Mucosa of descending colon (tissue), 3 donors: ENCODE measurements at regions of chr14 and their contacts with region 1.

Region 1: GRCh38 chr14:65164068-65164824 is 61.9 kb upstream of the MAX start:
- DNase-seq: peak in 1 of 3 donors; percentile 66
- ATAC-seq: peak; percentile 72
- H3K4me3 ChIP-seq: no peak overlapping the region
- H3K4me1 ChIP-seq: no peaks in the 10 kb centered on the region
- CTCF ChIP-seq: peak; percentile 27

Region 2: GRCh38 chr14:65222440-65222858 is 58.2 kb after region 1 on chr14:
- intact Hi-C with region 1: no loop called
- DNase-seq: peak; percentile 65 to 81 (median 74)
- ATAC-seq: peak; percentile 57
- H3K4me3 ChIP-seq: no peak overlapping the region
- H3K4me1 ChIP-seq: peaks cover 13% of the 10 kb centered on the region
- CTCF ChIP-seq: peak; percentile 70

Region 3: DNA sequence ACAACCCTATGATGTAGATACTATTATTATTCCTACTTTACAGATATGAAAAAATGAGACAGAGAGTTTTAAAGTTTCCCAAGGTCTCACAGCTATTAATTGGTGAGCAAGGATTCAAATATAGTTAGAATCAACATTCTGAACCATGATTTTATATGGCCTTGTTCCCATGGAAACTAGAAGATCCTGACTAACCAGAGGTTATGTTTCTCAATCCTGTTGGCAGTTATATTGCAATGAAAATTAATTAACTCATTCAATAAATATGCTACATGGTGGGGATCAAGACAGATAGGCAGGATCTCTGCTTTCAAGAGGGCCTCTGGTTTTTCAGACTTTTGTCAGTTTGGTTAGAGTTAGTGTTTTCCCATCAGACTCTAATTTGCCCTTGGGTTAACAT is 239.0 kb after region 1 on chr14:
- intact Hi-C with region 1: loop called in 1 of 2 experiments (anchors 10 kb)
- DNase-seq: no peak
- ATAC-seq: no peak
- H3K4me3 ChIP-seq: no peak overlapping the region
- H3K4me1 ChIP-seq: no peaks in the 10 kb centered on the region
- CTCF ChIP-seq: no peak

Region 4: DNA sequence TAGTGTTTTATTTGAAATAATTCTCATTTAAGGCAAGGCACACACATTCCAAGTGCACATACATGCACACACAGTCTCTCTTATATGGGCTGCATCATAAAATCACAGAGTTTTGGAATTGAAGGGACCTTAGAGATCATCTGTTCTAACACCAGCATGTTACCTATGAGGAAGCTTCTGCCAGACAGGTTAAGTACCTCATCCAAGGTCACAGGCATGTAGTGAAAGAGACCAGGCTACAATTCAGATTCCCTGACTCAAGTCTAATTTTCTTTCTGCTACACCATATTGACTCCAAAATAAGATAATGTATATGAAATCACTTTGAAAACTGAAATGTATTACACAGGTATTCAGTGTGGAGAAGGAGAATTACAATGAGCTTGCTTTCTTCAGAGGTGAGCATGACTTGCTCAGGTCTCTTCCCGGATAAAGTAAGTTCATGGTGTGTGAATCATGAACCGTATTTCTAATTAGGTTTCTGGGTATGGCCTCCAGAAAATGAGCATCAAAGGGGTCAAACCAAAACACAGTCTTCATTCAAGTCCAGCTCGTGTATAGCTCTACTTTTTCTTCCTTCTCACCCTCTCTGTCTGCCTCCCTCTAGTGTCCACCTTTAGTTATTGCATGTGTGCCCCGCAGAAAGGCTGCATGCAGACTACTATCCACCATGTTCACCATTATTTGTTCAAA is 660.2 kb after region 1 on chr14:
- intact Hi-C with region 1: loop called in 1 of 2 experiments (anchors 10 kb)
- DNase-seq: peak in 2 of 3 donors; percentile 40 to 65
- ATAC-seq: peak; percentile 90
- H3K4me3 ChIP-seq: no peak overlapping the region
- H3K4me1 ChIP-seq: no peaks in the 10 kb centered on the region
- CTCF ChIP-seq: peak; percentile 84

Region 5: GRCh38 chr14:65958664-65959562 is 794.7 kb after region 1 on chr14:
- intact Hi-C with region 1: loop called in 1 of 2 experiments (anchors 10 kb)
- DNase-seq: peak in 2 of 3 donors; percentile 29 to 37
- ATAC-seq: peak; percentile 76
- H3K4me3 ChIP-seq: no peak overlapping the region
- H3K4me1 ChIP-seq: peaks cover 16% of the 10 kb centered on the region
- CTCF ChIP-seq: peak; percentile 27

Region 6: DNA sequence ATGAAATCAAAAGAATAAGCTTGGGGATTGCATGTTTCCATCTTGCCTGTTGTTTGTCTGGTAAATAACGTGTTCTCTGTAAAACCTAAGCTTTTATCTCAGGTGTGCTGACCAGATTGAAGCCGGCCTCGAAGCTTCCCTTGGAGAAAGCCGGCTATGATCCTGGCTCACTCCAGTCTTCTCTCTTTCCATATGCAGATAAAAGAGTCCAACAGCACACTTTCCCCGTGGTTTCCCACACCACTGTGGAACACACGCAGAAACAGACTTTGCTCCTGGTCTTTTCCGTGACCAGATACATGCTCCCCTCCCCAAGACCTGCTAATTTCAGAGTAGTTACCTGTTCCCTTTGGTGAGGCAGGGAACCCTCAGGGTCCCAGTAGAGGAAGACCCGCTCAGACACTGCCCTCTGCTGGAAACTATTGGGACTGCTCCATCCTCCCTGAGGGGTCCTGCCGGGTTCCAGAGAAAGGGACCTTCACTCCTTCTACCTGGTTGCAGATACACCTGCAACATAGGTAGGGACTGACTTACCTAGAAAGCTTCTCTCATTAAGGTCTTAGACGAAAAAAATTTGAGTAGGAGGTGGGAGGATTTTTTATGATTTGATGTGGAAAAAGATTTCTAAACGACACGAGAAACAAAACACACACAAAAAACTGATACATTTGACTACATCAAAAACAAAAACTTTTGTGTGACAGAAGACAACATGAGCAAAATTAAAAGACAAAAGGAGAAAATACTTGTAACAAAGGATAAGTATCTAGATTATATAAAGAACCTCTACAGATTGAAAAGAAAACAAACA is 906.5 kb after region 1 on chr14:
- intact Hi-C with region 1: loop called in 1 of 2 experiments (anchors 10 kb)
- DNase-seq: peak in 2 of 3 donors; percentile 53 to 76
- ATAC-seq: peak; percentile 72
- H3K4me3 ChIP-seq: no peak overlapping the region
- H3K4me1 ChIP-seq: no peaks in the 10 kb centered on the region
- CTCF ChIP-seq: peak; percentile 66